Activated CD4-positive, alpha-beta T cell treated with anti-CD3 and anti-CD28 coated beads for 36 hours (primary cell): ENCODE measurements at regions of chr2 and their contacts with region 1.

Region 1: GRCh38 chr2:133886735-133887660 is 318.7 kb upstream of the NCKAP5 start:
- DNase-seq: peak; percentile 69
- ATAC-seq: peak; percentile 39
- H3K4me3 Mint-ChIP-seq: no peak overlapping the region
- H3K27ac Mint-ChIP-seq: no peak overlapping the region
- H3K4me1 Mint-ChIP-seq: no peaks in the 10 kb centered on the region
- H3K27me3 Mint-ChIP-seq: peaks cover 12% of the 10 kb centered on the region

Region 2: GRCh38 chr2:134104754-134105153 is 217.8 kb after region 1 on chr2:
- CTCF ChIA-PET with region 1: no interaction called
- POLR2A ChIA-PET with region 1: no interaction called
- intact Hi-C with region 1: loop called in 1 of 2 experiments (anchors 5 kb)
- DNase-seq: peak; percentile 55
- ATAC-seq: peak; percentile 99
- H3K4me3 Mint-ChIP-seq: no peak overlapping the region
- H3K27ac Mint-ChIP-seq: no peak overlapping the region
- H3K4me1 Mint-ChIP-seq: peaks cover 9% of the 10 kb centered on the region
- H3K27me3 Mint-ChIP-seq: no peaks in the 10 kb centered on the region

Region 3: DNA sequence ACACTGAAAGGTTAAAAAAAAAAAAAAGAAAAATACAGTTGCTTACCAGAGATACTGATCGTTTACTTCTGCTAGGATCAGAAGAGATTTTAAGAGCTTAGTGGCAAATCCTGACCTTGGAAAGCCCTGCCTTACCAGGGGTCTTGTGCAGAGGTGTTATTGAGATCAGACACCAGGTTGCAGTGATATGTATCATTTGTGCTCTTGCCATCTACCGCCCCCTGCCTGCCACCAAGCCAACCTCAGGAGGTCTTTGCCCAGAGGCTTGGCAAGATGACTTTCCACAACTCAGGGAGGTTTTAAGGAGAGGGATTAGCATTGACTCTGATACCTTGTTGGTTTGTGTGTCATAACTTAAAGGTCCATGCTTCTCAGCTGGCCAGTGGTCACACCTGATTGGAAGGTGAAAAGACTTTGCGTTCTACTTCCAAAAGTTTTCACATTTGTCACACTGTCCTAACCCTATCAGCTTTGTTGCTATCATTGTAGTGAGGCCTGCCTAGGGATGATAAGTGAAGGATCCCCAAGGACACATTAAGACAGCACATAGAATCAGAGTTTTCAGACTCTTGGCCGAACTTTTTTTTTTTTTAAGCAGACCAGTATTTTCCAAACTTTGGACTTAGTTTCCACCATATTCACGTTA is 320.7 kb after region 1 on chr2:
- CTCF ChIA-PET with region 1: interaction called, 5 read pairs
- POLR2A ChIA-PET with region 1: no interaction called
- intact Hi-C with region 1: loop called in 1 of 2 experiments (anchors 5 kb)
- DNase-seq: peak; percentile 82
- ATAC-seq: peak; percentile 87
- H3K4me3 Mint-ChIP-seq: no peak overlapping the region
- H3K27ac Mint-ChIP-seq: no peak overlapping the region
- H3K4me1 Mint-ChIP-seq: peaks cover 6% of the 10 kb centered on the region
- H3K27me3 Mint-ChIP-seq: no peaks in the 10 kb centered on the region

Region 4: GRCh38 chr2:134411828-134412638 is 525.0 kb after region 1 on chr2:
- CTCF ChIA-PET with region 1: interaction called, 21 read pairs
- POLR2A ChIA-PET with region 1: no interaction called
- intact Hi-C with region 1: loop called (anchors 1 to 2 kb)
- DNase-seq: peak; percentile 82
- ATAC-seq: peak; percentile 98
- H3K4me3 Mint-ChIP-seq: no peak overlapping the region
- H3K27ac Mint-ChIP-seq: no peak overlapping the region
- H3K4me1 Mint-ChIP-seq: peaks cover 41% of the 10 kb centered on the region
- H3K27me3 Mint-ChIP-seq: no peaks in the 10 kb centered on the region

Region 5: DNA sequence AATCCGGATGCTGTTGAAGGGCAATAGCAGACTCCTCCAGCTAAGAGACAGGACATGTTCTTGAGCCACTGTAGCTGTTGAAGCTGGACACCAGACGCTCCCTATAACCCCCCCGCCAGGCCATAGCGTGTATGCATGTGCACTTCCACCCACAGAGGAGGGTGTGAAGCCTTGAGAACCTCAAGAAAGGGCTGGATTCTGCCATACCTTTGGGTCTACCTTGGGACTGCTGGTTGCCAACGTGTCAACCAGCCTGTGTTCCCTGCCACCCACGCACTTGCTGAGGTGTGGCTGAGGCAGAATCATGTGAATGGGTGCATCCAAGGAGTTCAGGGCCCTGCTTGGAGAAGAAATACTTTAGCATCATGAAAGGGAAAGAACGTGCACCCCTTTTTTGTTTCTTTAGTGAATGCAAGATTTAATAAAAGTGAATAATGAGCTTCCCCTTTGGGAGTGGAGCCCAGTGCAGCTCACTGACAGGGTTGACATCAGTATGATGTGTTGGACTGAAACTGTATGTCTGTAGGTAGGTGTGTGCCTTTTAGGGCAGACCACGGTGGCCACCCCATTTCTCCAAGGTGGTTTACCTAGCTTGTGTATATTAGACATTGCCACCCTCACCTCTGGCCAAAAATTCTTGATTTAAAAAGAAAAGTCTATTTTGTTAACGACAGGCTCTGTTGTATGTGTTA is 565.2 kb after region 1 on chr2:
- CTCF ChIA-PET with region 1: no interaction called
- POLR2A ChIA-PET with region 1: no interaction called
- intact Hi-C with region 1: loop called in 1 of 2 experiments (anchors 1 kb)
- DNase-seq: no peak
- ATAC-seq: no peak
- H3K4me3 Mint-ChIP-seq: no peak overlapping the region
- H3K27ac Mint-ChIP-seq: no peak overlapping the region
- H3K4me1 Mint-ChIP-seq: no peaks in the 10 kb centered on the region
- H3K27me3 Mint-ChIP-seq: no peaks in the 10 kb centered on the region

Region 6: GRCh38 chr2:134897932-134898331 is 1010.9 kb after region 1 on chr2:
- CTCF ChIA-PET with region 1: no interaction called
- POLR2A ChIA-PET with region 1: no interaction called
- intact Hi-C with region 1: loop called in 1 of 2 experiments (anchors 5 kb)
- DNase-seq: no peak
- ATAC-seq: no peak
- H3K4me3 Mint-ChIP-seq: no peak overlapping the region
- H3K27ac Mint-ChIP-seq: no peak overlapping the region
- H3K4me1 Mint-ChIP-seq: no peaks in the 10 kb centered on the region
- H3K27me3 Mint-ChIP-seq: no peaks in the 10 kb centered on the region